Activated CD4-positive, alpha-beta T cell treated with anti-CD3 and anti-CD28 coated beads for 36 hours (primary cell): ENCODE measurements at regions of chr9 and their contacts with region 1.

Region 1: GRCh38 chr9:120348951-120349429 is 231.0 kb downstream of the CDK5RAP2 start:
- DNase-seq: peak; percentile 51
- ATAC-seq: peak; percentile 36
- H3K4me3 Mint-ChIP-seq: no peak overlapping the region
- H3K27ac Mint-ChIP-seq: no peak overlapping the region
- H3K4me1 Mint-ChIP-seq: peaks cover 3% of the 10 kb centered on the region
- H3K27me3 Mint-ChIP-seq: no peaks in the 10 kb centered on the region

Region 2: GRCh38 chr9:119370816-119371215 is 978.2 kb before region 1 on chr9:
- CTCF ChIA-PET with region 1: no interaction called
- POLR2A ChIA-PET with region 1: no interaction called
- intact Hi-C with region 1: loop called in 1 of 2 experiments (anchors 10 kb)
- DNase-seq: peak; percentile 49
- ATAC-seq: no peak
- H3K4me3 Mint-ChIP-seq: no peak overlapping the region
- H3K27ac Mint-ChIP-seq: no peak overlapping the region
- H3K4me1 Mint-ChIP-seq: peaks cover 3% of the 10 kb centered on the region
- H3K27me3 Mint-ChIP-seq: peaks cover 31% of the 10 kb centered on the region

Region 3: GRCh38 chr9:119556129-119556875 is 792.7 kb before region 1 on chr9:
- CTCF ChIA-PET with region 1: interaction called, 3 read pairs
- POLR2A ChIA-PET with region 1: no interaction called
- intact Hi-C with region 1: loop called (anchors 1 to 5 kb)
- DNase-seq: peak; percentile 79
- ATAC-seq: peak; percentile 75
- H3K4me3 Mint-ChIP-seq: no peak overlapping the region
- H3K27ac Mint-ChIP-seq: no peak overlapping the region
- H3K4me1 Mint-ChIP-seq: no peaks in the 10 kb centered on the region
- H3K27me3 Mint-ChIP-seq: peaks cover 27% of the 10 kb centered on the region

Region 4: GRCh38 chr9:119961774-119962424 is 387.1 kb before region 1 on chr9:
- CTCF ChIA-PET with region 1: no interaction called
- POLR2A ChIA-PET with region 1: no interaction called
- intact Hi-C with region 1: loop called in 1 of 2 experiments (anchors 2 kb)
- DNase-seq: peak; percentile 39
- ATAC-seq: no peak
- H3K4me3 Mint-ChIP-seq: no peak overlapping the region
- H3K27ac Mint-ChIP-seq: no peak overlapping the region
- H3K4me1 Mint-ChIP-seq: no peaks in the 10 kb centered on the region
- H3K27me3 Mint-ChIP-seq: peaks cover 20% of the 10 kb centered on the region

Region 5: DNA sequence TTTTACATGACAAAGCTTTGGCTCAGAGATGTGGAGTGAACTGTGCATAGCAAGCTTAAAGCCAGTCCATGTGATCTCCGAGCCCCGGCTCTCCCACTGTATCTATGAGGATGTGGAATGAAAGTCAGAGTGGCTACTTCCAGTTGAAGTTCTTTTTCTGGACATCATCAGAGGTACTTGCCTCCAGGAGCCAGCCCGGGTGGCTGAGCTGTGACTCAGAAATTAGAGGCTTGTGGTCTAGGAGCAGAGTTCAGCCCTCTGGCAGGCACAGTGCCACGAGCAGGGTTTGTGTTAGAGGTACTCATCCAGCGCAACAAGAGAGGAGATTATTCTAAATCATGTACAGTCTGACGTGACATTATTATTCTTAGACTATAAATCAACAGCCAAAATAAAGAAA is 91.5 kb before region 1 on chr9:
- CTCF ChIA-PET with region 1: no interaction called
- POLR2A ChIA-PET with region 1: no interaction called
- intact Hi-C with region 1: no loop called
- DNase-seq: no peak
- ATAC-seq: no peak
- H3K4me3 Mint-ChIP-seq: no peak overlapping the region
- H3K27ac Mint-ChIP-seq: no peak overlapping the region
- H3K4me1 Mint-ChIP-seq: no peaks in the 10 kb centered on the region
- H3K27me3 Mint-ChIP-seq: peaks cover 13% of the 10 kb centered on the region

Region 6: GRCh38 chr9:120324996-120325642 is 23.9 kb before region 1 on chr9:
- CTCF ChIA-PET with region 1: no interaction called
- POLR2A ChIA-PET with region 1: no interaction called
- intact Hi-C with region 1: no loop called
- DNase-seq: no peak
- ATAC-seq: no peak
- H3K4me3 Mint-ChIP-seq: no peak overlapping the region
- H3K27ac Mint-ChIP-seq: no peak overlapping the region
- H3K4me1 Mint-ChIP-seq: no peaks in the 10 kb centered on the region
- H3K27me3 Mint-ChIP-seq: peaks cover 4% of the 10 kb centered on the region

Region 7: GRCh38 chr9:120366646-120367019 is 17.6 kb after region 1 on chr9:
- CTCF ChIA-PET with region 1: no interaction called
- POLR2A ChIA-PET with region 1: no interaction called
- intact Hi-C with region 1: no loop called
- DNase-seq: no peak
- ATAC-seq: no peak
- H3K4me3 Mint-ChIP-seq: no peak overlapping the region
- H3K27ac Mint-ChIP-seq: no peak overlapping the region
- H3K4me1 Mint-ChIP-seq: no peaks in the 10 kb centered on the region
- H3K27me3 Mint-ChIP-seq: no peaks in the 10 kb centered on the region

Region 8: DNA sequence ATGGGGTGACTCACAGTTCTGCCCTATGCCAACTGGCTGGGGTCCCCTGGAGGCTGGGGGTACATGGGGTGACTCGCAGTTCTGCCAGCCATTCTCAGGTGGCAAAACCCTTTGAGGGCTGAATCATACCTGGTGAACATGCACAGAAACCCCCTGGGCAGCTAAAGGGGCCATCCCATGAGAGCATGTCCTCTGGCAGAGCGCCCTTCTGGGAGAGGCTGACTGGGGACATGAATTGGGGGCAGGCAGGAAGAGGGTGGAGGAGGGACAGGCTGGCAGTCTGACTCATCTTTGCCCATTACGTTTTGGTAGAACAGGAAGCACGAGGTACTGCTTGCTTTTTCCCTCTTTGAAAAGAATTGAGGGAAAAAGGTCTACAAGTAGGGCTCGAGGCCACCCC is 560.9 kb after region 1 on chr9:
- CTCF ChIA-PET with region 1: no interaction called
- POLR2A ChIA-PET with region 1: no interaction called
- intact Hi-C with region 1: no loop called
- DNase-seq: peak; percentile 77
- ATAC-seq: peak; percentile 63
- H3K4me3 Mint-ChIP-seq: no peak overlapping the region
- H3K27ac Mint-ChIP-seq: peak overlapping the region; percentile 92
- H3K4me1 Mint-ChIP-seq: peaks cover 94% of the 10 kb centered on the region
- H3K27me3 Mint-ChIP-seq: no peaks in the 10 kb centered on the region